Heart left ventricle (tissue), 16 donors: ENCODE measurements at regions of chr3 and their contacts with region 1.

Region 1: DNA sequence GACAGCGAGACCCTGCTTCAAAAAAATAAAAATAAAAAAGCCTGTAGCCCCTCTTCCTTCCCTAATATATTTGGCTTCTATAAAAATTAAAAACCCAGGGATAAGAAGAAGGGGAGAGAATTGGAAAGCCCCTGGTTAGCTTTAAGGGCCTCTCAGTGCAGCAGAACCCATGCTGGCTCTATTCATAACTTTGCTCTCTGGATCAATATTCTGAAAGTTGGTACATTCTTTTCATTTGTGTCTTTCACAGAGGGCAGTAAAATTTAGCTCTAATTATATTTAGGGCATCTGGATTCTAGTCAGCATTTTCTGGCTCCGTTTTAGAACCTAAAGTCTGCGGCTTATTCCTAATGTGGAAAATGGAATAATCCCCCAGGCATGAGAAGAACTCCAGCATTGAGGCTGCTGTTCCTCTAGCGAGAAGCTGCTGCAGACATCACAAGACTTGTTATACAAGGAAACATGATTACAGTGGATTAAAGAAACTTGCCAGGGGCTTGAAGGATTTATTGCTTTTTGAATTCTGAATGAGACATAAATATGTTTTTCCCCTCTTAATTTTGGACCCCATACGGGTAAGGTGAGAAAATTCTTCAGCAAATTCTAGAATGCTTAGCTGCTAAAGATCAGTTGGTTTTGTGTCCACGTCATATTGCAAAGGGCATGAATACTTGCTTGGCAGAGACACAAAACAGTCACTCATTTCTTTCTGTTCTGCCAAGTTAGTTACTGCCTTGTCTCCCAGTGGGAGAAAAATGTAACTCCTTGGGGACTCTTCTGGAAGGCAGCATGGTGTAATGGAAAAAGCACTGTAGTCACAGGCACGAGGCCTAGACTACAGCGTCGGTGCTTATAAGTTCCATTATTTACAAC is 177.7 kb downstream of the VGLL4 start:
- DNase-seq: peak in 4 of 5 donors; percentile 45 to 70 (median 61)
- ATAC-seq: peak; percentile 91 to 94 (median 93)
- H3K4me3 ChIP-seq: no peak overlapping the region
- H3K27ac ChIP-seq: peak overlapping the region; percentile 73 to 94 (median 84)
- H3K4me1 ChIP-seq: peaks cover 0 to 36% (median 21%) of the 10 kb centered on the region in 12 donors
- H3K27me3 ChIP-seq: no peaks in the 10 kb centered on the region
- CTCF ChIP-seq: no peak
- POLR2A ChIP-seq: no peak

Region 2: GRCh38 chr3:9970020-9970687 is 1495.8 kb before region 1 on chr3:
- intact Hi-C with region 1: no loop called
- DNase-seq: no peak
- ATAC-seq: no peak
- H3K4me3 ChIP-seq: no peak overlapping the region
- H3K27ac ChIP-seq: no peak overlapping the region
- H3K4me1 ChIP-seq: no peaks in the 10 kb centered on the region
- H3K27me3 ChIP-seq: no peaks in the 10 kb centered on the region
- CTCF ChIP-seq: no peak
- POLR2A ChIP-seq: no peak

Region 3: DNA sequence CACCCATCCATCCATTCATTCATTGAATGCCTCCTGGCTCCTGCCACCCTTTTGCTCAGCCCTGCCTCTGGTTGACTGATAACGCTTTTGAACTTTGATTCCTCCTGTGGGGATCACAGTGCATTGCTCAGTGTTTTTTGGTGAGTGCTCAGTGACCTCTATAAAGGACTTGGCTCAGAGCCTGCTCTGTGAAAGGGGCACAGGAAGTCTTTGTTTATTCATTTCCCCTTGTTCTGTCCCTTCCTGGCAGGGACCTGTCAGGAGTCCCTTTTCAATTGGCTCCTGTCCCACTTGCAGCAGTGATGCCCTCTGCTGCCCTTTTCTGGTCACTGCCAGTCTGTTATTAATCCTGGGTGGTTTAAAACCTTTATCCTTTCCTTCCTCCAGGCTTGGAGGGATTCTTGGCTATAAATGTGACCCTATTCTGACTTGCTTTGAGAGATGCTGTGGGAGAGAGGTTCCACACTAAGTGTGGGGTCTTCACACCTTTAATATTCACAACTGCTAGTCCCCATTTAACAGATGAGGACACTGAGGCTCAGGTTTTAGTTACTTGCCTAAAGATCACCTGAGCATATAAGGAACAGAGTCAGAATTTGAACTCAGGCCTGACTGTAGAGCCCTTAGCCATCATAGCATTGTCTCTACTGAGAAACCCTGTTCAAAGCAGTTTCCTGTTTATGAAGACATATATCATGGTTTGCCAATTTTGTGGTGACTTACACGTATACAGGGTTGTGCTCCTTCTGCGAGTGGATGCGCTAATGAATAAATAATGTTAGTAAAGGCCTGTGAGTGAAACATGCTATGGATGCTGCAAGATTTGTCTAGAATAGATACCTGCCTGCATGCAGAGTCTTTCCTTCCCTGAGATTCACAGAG is 1241.0 kb before region 1 on chr3:
- intact Hi-C with region 1: no loop called
- DNase-seq: peak; percentile 68 to 75 (median 70)
- ATAC-seq: peak; percentile 58 to 94 (median 91)
- H3K4me3 ChIP-seq: no peak overlapping the region
- H3K27ac ChIP-seq: peak overlapping the region in 1 of 12 donors; percentile 18
- H3K4me1 ChIP-seq: peaks cover 0 to 56% (median 4%) of the 10 kb centered on the region in 12 donors
- H3K27me3 ChIP-seq: no peaks in the 10 kb centered on the region
- CTCF ChIP-seq: peak; percentile 69 to 88 (median 84)
- POLR2A ChIP-seq: no peak

Region 4: DNA sequence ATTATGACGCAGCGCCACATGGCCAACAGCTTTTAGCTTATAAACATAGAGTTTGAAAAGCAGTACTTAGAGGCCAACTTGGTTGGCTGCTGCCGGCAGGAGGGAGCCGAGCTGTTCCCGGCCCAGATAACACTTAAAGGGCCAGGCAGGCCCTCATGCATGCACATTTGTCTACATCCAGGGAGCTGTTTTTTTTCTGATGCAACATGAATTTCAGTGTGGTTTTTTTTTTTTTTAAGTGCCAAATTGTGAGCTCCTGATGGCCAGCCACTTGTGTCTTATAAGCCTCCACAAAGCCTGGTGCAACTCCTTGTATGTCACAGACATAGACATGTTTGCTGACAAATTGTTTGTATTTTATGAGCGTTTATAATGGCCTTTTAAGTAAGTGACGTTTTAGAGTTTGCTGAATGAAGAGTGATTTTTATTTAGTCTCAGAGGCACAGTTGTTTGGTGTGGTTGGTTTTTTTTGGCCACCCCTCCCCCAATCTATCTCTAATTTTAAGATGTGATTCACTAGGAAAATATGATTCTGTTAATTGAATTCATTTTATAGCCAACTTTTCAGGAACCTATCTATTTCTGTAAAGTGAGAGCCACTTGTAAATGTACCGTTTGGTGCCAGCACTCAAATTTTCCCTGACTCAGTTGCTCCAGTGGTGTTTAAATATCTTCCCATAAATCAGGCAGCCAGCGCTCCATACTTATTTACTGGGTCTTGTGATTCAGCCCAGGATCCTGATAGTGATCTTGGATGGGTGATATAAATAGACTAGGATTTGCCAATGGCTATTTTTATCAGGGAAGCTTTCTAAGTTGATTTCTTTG is 43.4 kb after region 1 on chr3:
- intact Hi-C with region 1: loop called in 2 of 10 experiments (anchors 1 kb)
- DNase-seq: peak; percentile 68 to 86 (median 78)
- ATAC-seq: peak; percentile 92 to 95 (median 94)
- H3K4me3 ChIP-seq: peak overlapping the region in 4 of 12 donors; percentile 4 to 27 (median 10)
- H3K27ac ChIP-seq: peak overlapping the region; percentile 66 to 94 (median 76)
- H3K4me1 ChIP-seq: peaks cover 8 to 47% (median 40%) of the 10 kb centered on the region in 12 donors
- H3K27me3 ChIP-seq: no peaks in the 10 kb centered on the region
- CTCF ChIP-seq: peak in 6 of 12 donors; percentile 3 to 40 (median 18)
- POLR2A ChIP-seq: no peak

Region 5: DNA sequence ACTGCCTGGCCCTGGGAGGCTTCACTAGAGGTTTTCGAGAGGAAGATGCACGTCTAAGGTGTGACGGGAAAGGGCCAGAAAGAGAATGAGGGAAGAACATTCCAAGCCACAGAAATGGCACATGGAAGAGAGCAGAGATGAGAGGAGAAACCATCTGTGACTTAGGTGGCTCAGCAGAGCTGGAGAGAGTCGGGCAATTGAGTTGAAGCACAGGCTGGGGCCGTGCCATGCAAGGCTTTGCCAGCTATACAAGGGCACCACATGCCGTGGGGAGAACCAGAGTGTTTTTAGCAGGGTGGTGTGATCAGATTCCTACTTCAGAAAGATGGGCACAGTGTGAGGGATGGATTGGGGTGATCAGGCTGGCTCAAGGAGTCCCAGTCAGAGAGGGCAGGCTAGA is 51.6 kb after region 1 on chr3:
- intact Hi-C with region 1: loop called in 1 of 10 experiments (anchors 5 kb)
- DNase-seq: no peak
- ATAC-seq: no peak
- H3K4me3 ChIP-seq: no peak overlapping the region
- H3K27ac ChIP-seq: no peak overlapping the region
- H3K4me1 ChIP-seq: peaks cover 0 to 26% (median 19%) of the 10 kb centered on the region in 12 donors
- H3K27me3 ChIP-seq: no peaks in the 10 kb centered on the region
- CTCF ChIP-seq: no peak
- POLR2A ChIP-seq: no peak

Region 6: GRCh38 chr3:11530153-11530721 is 64.3 kb after region 1 on chr3:
- intact Hi-C with region 1: loop called in 1 of 10 experiments (anchors 10 kb)
- DNase-seq: peak in 4 of 5 donors; percentile 47 to 82 (median 76)
- ATAC-seq: peak; percentile 78 to 89 (median 84)
- H3K4me3 ChIP-seq: no peak overlapping the region
- H3K27ac ChIP-seq: peak overlapping the region in 4 of 12 donors; percentile 7 to 37 (median 14)
- H3K4me1 ChIP-seq: peaks cover 0 to 34% (median 11%) of the 10 kb centered on the region in 12 donors
- H3K27me3 ChIP-seq: no peaks in the 10 kb centered on the region
- CTCF ChIP-seq: peak in 4 of 12 donors; percentile 8 to 26 (median 17)
- POLR2A ChIP-seq: no peak